T-cell (primary cell): ENCODE measurements at regions of chr17 and their contacts with region 1.

Region 1: DNA sequence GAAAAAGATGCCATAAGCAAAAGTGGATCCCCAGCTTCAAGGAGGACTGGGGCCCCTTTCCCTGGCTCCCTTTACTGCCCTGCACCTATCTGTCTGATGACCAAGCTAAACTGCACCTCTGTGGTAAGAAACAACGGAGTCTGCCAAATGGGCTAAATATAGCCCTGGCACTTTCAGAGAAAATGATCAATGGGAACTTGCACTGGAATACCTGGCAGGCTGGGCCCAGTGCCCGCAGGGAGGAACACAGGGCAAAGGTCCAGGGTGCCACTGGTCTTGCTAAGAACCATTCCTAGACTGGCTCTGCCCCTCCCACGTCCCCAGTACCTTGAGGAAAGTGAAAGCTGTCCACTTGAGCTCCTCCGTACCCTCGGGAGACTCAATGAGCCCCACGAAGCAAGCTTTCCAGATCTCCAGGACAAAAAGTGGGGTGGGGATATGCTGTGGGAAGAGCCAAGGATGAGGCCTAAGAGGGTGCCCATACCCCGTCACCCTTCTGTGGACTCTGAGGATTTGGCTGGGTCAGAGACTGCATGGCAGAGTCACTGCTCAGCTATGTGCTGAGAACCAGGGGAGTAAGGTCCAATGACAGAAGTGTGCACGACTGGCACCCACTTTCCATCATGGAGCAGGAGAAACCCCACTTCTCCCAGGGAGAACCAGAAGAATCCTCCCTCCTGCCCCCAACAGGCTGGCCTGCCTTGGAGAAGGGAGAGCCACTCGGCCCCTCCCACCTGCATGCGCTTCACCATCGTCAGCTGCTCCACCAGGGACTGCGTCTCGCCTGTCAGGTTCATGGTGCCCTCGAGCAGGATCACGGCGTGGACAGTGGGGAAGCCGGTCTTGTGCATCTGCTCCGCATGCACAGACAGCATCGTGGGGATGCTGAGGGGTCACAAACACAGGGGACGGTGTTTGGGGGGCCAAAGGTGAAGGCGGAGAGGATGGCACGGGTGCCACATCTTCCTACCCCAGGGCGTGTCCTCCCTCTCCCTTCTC is 17.4 kb downstream of the CSF3 start:
- DNase-seq: no peak
- ATAC-seq: no peak
- H3K4me3 ChIP-seq: no peak overlapping the region
- H3K4me3 Mint-ChIP-seq: no peak overlapping the region
- H3K27ac ChIP-seq: no peak overlapping the region
- H3K27ac Mint-ChIP-seq: no peak overlapping the region
- H3K4me1 ChIP-seq: no peaks in the 10 kb centered on the region
- H3K4me1 Mint-ChIP-seq: no peaks in the 10 kb centered on the region
- H3K27me3 ChIP-seq: no peaks in the 10 kb centered on the region
- H3K27me3 Mint-ChIP-seq: no peaks in the 10 kb centered on the region

Region 2: GRCh38 chr17:40173778-40174135 is 141.1 kb after region 1 on chr17:
- CTCF ChIA-PET with region 1: interaction called, 5 to 10 read pairs
- POLR2A ChIA-PET with region 1: no interaction called
- DNase-seq: no peak
- ATAC-seq: no peak
- H3K4me3 ChIP-seq: no peak overlapping the region
- H3K4me3 Mint-ChIP-seq: no peak overlapping the region
- H3K27ac ChIP-seq: no peak overlapping the region
- H3K27ac Mint-ChIP-seq: no peak overlapping the region
- H3K4me1 ChIP-seq: peaks cover 0 to 21% of the 10 kb centered on the region in 2 experiments
- H3K4me1 Mint-ChIP-seq: peaks cover 6 to 10% (median 9%) of the 10 kb centered on the region in 3 donors
- H3K27me3 ChIP-seq: peaks cover 0 to 4% of the 10 kb centered on the region in 2 experiments
- H3K27me3 Mint-ChIP-seq: no peaks in the 10 kb centered on the region

Region 3: DNA sequence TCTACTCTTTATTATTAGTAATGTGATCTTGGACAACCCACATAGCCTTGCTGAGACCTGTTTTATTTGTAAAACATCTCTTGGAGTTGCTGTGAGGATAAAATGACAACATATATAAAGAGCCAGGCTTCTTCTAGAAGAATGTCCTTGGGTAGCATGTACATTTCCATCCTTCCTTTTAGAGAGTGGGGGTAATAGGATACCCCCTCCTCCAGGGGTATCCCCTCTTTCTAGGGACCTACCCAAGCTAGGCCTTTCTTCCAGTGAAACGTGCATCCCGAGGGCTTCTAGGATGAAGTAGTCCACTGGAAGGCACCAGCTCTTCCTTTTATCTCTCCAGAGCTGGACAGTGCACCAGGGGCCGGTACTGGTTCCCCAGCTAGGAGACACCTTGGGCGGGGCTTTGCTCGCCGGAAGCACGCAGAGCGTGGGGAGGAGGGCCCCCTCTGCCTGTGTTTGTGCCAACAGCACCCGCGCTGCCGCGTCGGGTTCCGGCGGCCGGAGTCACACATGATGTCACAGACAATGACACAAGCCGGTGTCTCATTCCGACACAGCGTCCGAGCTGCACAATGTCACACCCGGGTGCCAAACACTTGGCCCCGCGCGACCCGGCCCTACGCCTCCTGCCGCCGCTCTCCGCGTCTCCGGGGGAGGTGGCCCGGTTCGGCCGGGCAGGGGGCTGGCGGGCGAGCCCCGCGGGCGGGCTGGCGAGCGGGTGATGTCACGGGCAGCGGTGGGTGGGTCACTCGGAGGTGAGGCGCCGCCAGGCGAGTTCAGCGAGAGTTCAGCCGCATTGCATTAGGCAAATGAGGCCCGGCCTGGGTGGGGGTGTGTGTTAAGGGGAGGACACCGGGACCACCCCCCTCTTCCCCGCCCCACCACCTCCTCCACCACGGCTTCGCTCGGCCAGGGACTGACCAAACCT is 308.5 kb after region 1 on chr17:
- CTCF ChIA-PET with region 1: no interaction called
- POLR2A ChIA-PET with region 1: no interaction called
- DNase-seq: peak; percentile 61 to 94 (median 88)
- ATAC-seq: peak; percentile 79 to 82 (median 81)
- H3K4me3 ChIP-seq: peak overlapping the region; percentile 67 to 72
- H3K4me3 Mint-ChIP-seq: peak overlapping the region; percentile 74 to 82 (median 77)
- H3K27ac ChIP-seq: peak overlapping the region; percentile 84
- H3K27ac Mint-ChIP-seq: peak overlapping the region; percentile 86 to 92
- H3K4me1 ChIP-seq: peaks cover 65 to 89% of the 10 kb centered on the region in 2 experiments
- H3K4me1 Mint-ChIP-seq: peaks cover 74 to 80% (median 78%) of the 10 kb centered on the region in 3 donors
- H3K27me3 ChIP-seq: no peaks in the 10 kb centered on the region
- H3K27me3 Mint-ChIP-seq: no peaks in the 10 kb centered on the region